BJ (cell line): ENCODE measurements at regions of chr3 and their contacts with region 1.

Region 1: DNA sequence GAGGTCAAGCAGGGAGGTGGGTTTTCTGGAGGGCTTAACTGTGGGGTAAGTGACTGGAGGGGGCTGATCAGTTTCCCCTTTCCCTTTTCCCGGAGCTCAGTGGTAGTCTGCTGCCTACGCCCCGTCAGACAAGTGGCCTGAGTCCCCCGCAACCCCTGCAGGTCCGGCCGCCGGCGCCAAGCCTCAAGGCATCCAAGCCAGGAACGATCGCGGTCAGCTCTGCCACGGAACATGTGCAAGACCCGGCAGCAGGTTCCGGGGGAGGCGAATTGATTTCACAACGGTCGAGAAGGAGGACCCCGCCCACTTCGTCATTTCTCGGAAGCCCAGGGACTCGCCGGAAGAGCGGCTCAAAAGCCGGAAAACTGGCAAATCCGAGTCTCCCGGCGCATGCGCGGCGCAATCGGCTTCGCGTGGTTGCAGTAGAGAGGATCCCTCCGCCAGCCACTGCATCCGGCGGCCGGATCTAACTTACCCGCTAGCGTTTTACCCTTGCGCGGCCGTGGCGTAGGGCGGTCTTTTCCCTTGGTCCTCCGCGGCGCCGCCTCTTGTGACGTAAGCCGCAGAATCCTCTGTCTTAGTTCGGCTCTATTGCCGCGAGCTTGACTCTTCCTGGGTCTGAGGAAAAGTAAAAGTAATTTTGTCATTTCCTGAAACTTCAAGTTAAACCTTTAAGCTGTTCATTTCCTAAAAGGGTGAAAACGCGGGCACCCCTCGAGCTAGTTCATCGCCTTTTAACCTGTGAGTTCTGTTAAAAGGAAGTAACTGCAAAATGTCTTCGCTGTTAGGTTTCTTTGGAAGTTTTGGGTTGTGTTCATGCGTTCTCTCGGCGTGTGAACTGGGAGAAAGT is 14.9 kb upstream of the CCNL1 start:
- DNase-seq: peak; percentile 99
- H3K4me3 ChIP-seq: peak overlapping the region; percentile 60
- H3K27me3 ChIP-seq: no peaks in the 10 kb centered on the region
- CTCF ChIP-seq: no peak

Region 2: DNA sequence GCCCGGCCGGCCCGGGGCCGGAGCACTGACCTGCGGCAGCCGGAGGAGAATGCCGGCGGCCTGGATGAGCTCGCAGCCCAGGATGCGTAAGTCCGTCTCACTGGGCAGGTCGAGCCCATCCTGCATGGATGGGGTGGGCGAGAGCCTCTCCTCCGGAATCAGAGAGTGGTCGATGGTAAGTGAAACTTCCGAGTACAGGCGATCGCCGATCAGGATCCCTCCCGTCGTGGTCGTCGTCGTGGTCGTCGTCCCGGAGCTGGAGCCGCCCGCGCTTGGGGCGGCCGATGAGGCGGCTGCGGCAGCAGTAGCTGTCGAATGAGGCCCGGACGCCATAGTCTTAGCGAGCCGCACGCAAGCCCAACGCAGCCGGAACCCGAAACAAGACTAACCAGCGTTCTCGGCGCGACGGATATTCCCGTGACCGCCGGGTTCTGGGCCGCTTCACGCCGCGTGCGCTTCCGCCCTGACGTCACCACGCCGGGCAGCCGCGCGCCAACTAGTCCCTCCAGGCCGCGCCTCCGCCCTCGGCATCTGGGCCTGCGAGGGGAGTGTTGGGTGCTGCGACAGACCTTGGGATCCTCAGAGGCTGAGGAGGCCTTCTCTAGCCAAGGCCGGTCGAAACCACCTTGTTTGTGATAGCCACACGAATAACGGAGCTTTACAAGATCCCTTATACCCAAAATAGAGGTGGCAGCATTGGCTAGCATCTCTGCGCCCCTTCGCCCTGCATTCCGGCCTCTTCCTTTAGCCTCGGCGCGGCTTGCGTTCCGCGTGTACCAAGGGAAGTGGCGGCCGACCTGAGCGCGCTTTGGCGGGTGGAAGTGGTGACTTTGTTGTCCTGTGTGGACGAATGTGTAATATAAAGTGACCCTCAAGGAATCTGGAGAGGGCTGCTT is 14.9 kb before region 1 on chr3 and contains the start of gene CCNL1:
- CTCF ChIA-PET with region 1: interaction called, 10 read pairs
- POLR2A ChIA-PET with region 1: interaction called, 39 read pairs
- DNase-seq: peak; percentile 75
- H3K4me3 ChIP-seq: peak within 1 kb of the TSS; percentile 98
- H3K27me3 ChIP-seq: no peaks in the 10 kb centered on the region
- CTCF ChIP-seq: no peak
- polyA plus RNA-seq, gene CCNL1: 132 and 145 TPM in 2 replicates